Naive thymus-derived CD4-positive, alpha-beta T cell (primary cell): ENCODE measurements at regions of chr15 and their contacts with region 1.

Region 1: GRCh38 chr15:31326156-31326732 is 391 bp upstream of the KLF13 start:
- DNase-seq: peak; percentile 98 to 100 (median 100)
- ATAC-seq: peak; percentile 86
- H3K4me3 ChIP-seq: peak overlapping the region; percentile 72
- H3K4me3 Mint-ChIP-seq: peak overlapping the region; percentile 65 to 92 (median 81)
- H3K27ac ChIP-seq: peak overlapping the region; percentile 99
- H3K27ac Mint-ChIP-seq: peak overlapping the region; percentile 31 to 97 (median 78)
- H3K4me1 ChIP-seq: peaks cover 28 to 36% of the 10 kb centered on the region in 2 donors
- H3K4me1 Mint-ChIP-seq: peaks cover 41 to 64% (median 56%) of the 10 kb centered on the region in 7 donors
- H3K27me3 ChIP-seq: no peaks in the 10 kb centered on the region
- H3K27me3 Mint-ChIP-seq: no peaks in the 10 kb centered on the region

Region 2: GRCh38 chr15:30991255-30992072 is 334.8 kb before region 1 on chr15 and contains the start of gene MTMR10:
- CTCF ChIA-PET with region 1: no interaction called
- POLR2A ChIA-PET with region 1: interaction called, 3 read pairs
- intact Hi-C with region 1: loop called in 1 of 2 experiments (anchors 1 kb)
- DNase-seq: peak; percentile 54 to 84 (median 82)
- ATAC-seq: peak; percentile 96
- H3K4me3 ChIP-seq: peak within 1 kb of the TSS; percentile 96
- H3K4me3 Mint-ChIP-seq: peak within 1 kb of the TSS; percentile 91 to 97 (median 95)
- H3K27ac ChIP-seq: peak within 1 kb of the TSS; percentile 89
- H3K27ac Mint-ChIP-seq: peak within 1 kb of the TSS; percentile 90 to 98 (median 93)
- H3K4me1 ChIP-seq: peaks cover 23 to 27% of the 10 kb centered on the region in 2 donors
- H3K4me1 Mint-ChIP-seq: peaks cover 22 to 49% (median 37%) of the 10 kb centered on the region in 7 donors
- H3K27me3 ChIP-seq: no peaks in the 10 kb centered on the region
- H3K27me3 Mint-ChIP-seq: peaks cover 0 to 13% (median 0%) of the 10 kb centered on the region in 5 donors
- total RNA-seq, gene MTMR10: 21.2 to 50.8 (median 34.0) TPM

Region 3: GRCh38 chr15:31215490-31216214 is 110.6 kb before region 1 on chr15:
- CTCF ChIA-PET with region 1: interaction called, 15 read pairs
- POLR2A ChIA-PET with region 1: interaction called, 50 read pairs
- intact Hi-C with region 1: loop called (anchors 1 kb)
- DNase-seq: peak; percentile 53 to 84 (median 69)
- ATAC-seq: peak; percentile 84
- H3K4me3 ChIP-seq: peak overlapping the region; percentile 30
- H3K4me3 Mint-ChIP-seq: peak overlapping the region; percentile 50 to 90 (median 74)
- H3K27ac ChIP-seq: peak overlapping the region; percentile 76
- H3K27ac Mint-ChIP-seq: peak overlapping the region; percentile 84 to 91 (median 87)
- H3K4me1 ChIP-seq: peaks cover 11 to 14% of the 10 kb centered on the region in 2 donors
- H3K4me1 Mint-ChIP-seq: peaks cover 5 to 54% (median 41%) of the 10 kb centered on the region in 7 donors
- H3K27me3 ChIP-seq: no peaks in the 10 kb centered on the region
- H3K27me3 Mint-ChIP-seq: no peaks in the 10 kb centered on the region

Region 4: GRCh38 chr15:31302778-31303725 is 23.2 kb before region 1 on chr15:
- CTCF ChIA-PET with region 1: no interaction called
- POLR2A ChIA-PET with region 1: interaction called, 5 read pairs
- intact Hi-C with region 1: loop called in 1 of 2 experiments (anchors 1 kb)
- DNase-seq: peak in 2 of 9 donors; percentile 30 to 44
- ATAC-seq: peak; percentile 63
- H3K4me3 ChIP-seq: no peak overlapping the region
- H3K4me3 Mint-ChIP-seq: peak overlapping the region in 3 of 10 donors; percentile 5 to 51 (median 15)
- H3K27ac ChIP-seq: no peak overlapping the region
- H3K27ac Mint-ChIP-seq: peak overlapping the region in 7 of 9 donors; percentile 22 to 75 (median 61)
- H3K4me1 ChIP-seq: peaks cover 0 to 31% of the 10 kb centered on the region in 2 donors
- H3K4me1 Mint-ChIP-seq: peaks cover 17 to 52% (median 35%) of the 10 kb centered on the region in 7 donors
- H3K27me3 ChIP-seq: no peaks in the 10 kb centered on the region
- H3K27me3 Mint-ChIP-seq: peaks cover 0 to 6% (median 0%) of the 10 kb centered on the region in 5 donors

Region 5: DNA sequence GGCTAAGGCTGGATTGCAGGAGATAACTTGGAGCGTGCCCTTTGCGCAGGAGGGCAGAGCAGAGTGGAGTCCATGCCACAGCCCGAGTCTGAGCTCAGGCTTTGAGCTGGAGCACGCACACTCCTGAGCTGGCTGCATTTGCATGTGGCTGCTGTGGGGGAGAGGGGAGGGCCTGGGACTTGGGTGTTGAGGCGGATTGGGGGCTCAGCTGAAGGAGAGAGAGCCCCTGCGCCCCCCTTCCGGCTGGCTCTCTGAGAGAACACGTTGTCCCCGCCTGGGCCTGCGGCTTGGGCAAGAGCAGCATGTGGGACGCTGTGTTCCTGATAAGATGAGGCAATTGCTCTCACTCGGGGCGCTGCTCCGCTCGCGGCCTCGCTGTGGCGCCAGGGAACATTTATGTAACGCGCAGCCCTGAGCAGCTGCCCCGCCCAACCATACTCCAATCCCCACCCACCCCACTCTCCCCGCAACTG is 39.4 kb after region 1 on chr15:
- CTCF ChIA-PET with region 1: interaction called, 15 read pairs
- POLR2A ChIA-PET with region 1: interaction called, 367 read pairs
- intact Hi-C with region 1: loop called (anchors 1 kb)
- DNase-seq: peak; percentile 53 to 82 (median 78)
- ATAC-seq: peak; percentile 68
- H3K4me3 ChIP-seq: peak overlapping the region; percentile 36
- H3K4me3 Mint-ChIP-seq: peak overlapping the region; percentile 72 to 88 (median 85)
- H3K27ac ChIP-seq: peak overlapping the region; percentile 94
- H3K27ac Mint-ChIP-seq: peak overlapping the region; percentile 92 to 99 (median 97)
- H3K4me1 ChIP-seq: peaks cover 87% of the 10 kb centered on the region in 2 donors
- H3K4me1 Mint-ChIP-seq: peaks cover 85 to 100% (median 99%) of the 10 kb centered on the region in 7 donors
- H3K27me3 ChIP-seq: no peaks in the 10 kb centered on the region
- H3K27me3 Mint-ChIP-seq: no peaks in the 10 kb centered on the region

Region 6: DNA sequence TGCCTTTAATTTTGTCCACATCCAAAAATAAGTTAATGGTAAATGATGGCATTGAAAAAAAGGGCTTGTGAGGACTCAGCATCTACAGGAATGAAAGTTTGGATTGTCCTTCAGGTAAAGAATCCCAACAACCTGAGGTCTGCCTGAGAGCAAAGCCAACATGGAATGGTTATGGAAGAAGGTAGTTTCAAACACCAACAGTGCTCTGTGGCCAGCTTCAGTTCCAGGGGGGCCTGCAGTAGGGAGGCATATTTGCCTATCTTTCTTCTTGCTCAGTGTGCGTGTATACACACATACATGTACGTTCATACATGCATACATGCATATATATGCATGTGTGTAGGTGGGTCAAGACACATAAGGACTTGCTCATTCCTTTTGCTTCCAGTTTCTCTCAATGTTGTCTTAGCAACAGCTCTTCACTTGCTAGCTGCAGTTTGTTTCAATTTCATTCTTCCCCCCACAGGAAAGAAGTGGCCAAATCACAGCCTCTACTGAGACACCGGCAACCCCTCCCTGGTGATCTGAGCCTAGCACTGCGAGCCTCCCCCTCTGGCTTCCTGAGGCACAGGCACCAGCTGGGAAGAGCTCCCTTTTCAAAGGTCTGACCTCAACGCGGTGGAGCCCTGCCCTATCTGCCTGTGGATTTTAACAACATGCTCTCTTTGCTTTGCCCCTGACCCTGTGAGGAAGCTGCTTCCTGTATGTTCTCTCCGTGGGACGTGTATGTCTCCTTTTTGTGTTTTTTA is 146.6 kb after region 1 on chr15:
- CTCF ChIA-PET with region 1: no interaction called
- POLR2A ChIA-PET with region 1: interaction called, 4 read pairs
- intact Hi-C with region 1: loop called in 1 of 2 experiments (anchors 5 kb)
- DNase-seq: peak in 8 of 9 donors; percentile 48 to 71 (median 66)
- ATAC-seq: peak; percentile 90
- H3K4me3 ChIP-seq: peak overlapping the region; percentile 28
- H3K4me3 Mint-ChIP-seq: peak overlapping the region; percentile 69 to 90 (median 79)
- H3K27ac ChIP-seq: peak overlapping the region; percentile 66
- H3K27ac Mint-ChIP-seq: peak overlapping the region; percentile 90 to 96 (median 93)
- H3K4me1 ChIP-seq: peaks cover 29 to 34% of the 10 kb centered on the region in 2 donors
- H3K4me1 Mint-ChIP-seq: peaks cover 22 to 62% (median 58%) of the 10 kb centered on the region in 7 donors
- H3K27me3 ChIP-seq: no peaks in the 10 kb centered on the region
- H3K27me3 Mint-ChIP-seq: no peaks in the 10 kb centered on the region